ENCODE measurements at regions of chr3 and their contacts with region 1.

Region 1: DNA sequence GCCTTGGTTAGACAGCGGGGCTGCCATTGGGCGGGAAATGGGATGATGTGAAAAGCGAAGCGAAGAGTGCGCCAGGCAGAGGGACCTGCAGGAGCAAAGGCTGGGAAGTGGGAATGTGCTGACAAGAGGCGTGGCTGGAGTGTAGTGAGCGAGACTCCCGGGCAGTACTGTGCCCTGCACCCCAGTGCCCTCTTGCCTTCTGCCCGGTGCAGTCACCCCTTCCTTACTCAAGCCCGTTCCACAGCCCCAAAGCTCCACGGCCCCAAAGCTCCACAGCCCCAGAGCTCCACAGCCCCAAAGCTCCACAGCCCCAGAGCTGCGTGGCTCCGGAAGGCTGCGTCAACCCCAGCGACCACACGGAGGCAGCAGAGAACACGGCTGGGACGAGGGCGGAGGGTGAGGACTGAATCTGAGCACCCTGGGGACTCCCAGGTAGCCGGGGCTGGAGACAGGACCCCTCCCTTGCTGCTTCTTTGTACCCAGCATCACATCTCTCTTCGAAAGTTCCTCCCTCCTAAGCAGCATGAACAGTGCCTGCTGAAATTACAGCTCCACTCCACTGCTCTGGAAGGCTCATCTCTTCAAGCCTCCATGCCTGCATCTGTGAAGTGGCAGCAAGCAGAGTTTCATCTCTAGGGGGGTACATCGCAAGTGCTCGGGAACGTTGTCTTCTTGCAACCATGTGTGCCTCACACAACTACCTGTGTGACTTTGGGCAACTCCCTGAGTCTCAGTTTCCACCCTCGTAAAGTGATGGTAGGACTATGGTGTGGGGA is 108.9 kb downstream of the FBLN2 start:
- DNase-seq: peak; percentile 62 to 73 (median 69)
- H3K4me3 ChIP-seq: no peak overlapping the region
- H3K4me3 Mint-ChIP-seq: peak overlapping the region in 2 of 8 donors; percentile 55 to 57
- H3K27ac ChIP-seq: no peak overlapping the region
- H3K27ac Mint-ChIP-seq: peak overlapping the region in 2 of 7 donors; percentile 42 to 51
- H3K4me1 ChIP-seq: peaks cover 31% of the 10 kb centered on the region
- H3K4me1 Mint-ChIP-seq: peaks cover 15 to 46% (median 28%) of the 10 kb centered on the region in 4 donors
- H3K27me3 ChIP-seq: peaks cover 6% of the 10 kb centered on the region
- H3K27me3 Mint-ChIP-seq: peaks cover 3 to 5% of the 10 kb centered on the region in 2 donors

Region 2: DNA sequence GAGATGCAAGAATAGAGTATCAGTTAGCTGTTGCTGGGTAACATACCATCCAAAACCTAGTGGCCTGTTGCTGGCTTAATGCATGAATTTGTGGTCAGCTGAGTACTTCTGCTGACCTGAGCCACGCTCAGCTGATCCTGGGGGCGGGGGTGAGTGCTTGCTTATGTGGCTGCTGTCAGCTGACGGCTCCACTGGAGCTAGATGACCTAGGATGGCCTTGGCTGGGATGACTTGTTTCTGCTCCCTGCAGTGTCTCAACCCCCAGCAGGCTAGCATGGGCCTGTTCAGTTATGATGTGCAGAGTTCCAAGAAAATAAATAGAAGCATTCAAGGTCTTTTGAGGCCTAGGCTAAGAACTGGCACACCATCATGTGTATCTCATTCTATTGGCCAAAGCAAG is 45.0 kb before region 1 on chr3:
- CTCF ChIA-PET with region 1: no interaction called
- POLR2A ChIA-PET with region 1: no interaction called
- intact Hi-C with region 1: no loop called
- DNase-seq: no peak
- H3K4me3 ChIP-seq: no peak overlapping the region
- H3K4me3 Mint-ChIP-seq: no peak overlapping the region
- H3K27ac ChIP-seq: no peak overlapping the region
- H3K27ac Mint-ChIP-seq: no peak overlapping the region
- H3K4me1 ChIP-seq: no peaks in the 10 kb centered on the region
- H3K4me1 Mint-ChIP-seq: no peaks in the 10 kb centered on the region
- H3K27me3 ChIP-seq: no peaks in the 10 kb centered on the region
- H3K27me3 Mint-ChIP-seq: peaks cover 4 to 16% of the 10 kb centered on the region in 2 donors

Region 3: DNA sequence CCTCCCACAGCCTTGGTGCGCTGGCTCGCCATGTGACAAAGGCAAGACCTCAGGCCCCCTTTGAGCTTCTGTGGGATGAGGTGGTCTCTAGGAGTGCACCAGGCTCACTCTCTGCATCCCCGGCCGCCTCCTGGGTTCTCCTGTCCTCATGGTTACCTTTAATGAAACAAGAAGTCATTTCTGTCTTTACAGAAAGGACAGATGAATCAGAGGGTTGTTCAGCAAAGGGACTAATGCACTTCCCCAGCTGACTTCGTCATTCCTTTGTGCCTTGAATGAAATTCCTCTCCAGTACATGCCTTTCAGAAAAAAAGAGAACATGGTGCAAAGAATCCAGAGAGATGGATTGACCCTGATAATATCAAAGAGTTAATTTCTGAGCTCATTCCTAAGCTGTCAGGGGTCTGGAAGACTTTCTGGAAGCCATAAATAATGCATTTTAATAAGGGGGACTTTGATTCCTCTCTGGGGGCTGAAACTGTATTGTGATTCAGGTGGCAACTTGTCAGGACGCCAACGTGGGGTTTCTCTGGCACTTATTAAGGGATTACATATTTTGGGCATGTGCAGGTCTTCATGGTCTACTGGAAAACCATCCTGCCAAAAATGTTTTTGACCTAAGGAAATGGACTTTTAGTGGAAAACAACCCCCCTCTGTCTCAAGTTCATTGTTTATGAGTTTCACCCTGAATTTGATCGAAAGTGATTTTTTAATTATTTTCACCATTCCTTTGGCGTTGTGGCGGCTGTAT is 13.8 kb after region 1 on chr3:
- CTCF ChIA-PET with region 1: interaction called, 15 read pairs
- POLR2A ChIA-PET with region 1: no interaction called
- intact Hi-C with region 1: no loop called
- DNase-seq: no peak
- H3K4me3 ChIP-seq: no peak overlapping the region
- H3K4me3 Mint-ChIP-seq: no peak overlapping the region
- H3K27ac ChIP-seq: no peak overlapping the region
- H3K27ac Mint-ChIP-seq: no peak overlapping the region
- H3K4me1 ChIP-seq: no peaks in the 10 kb centered on the region
- H3K4me1 Mint-ChIP-seq: peaks cover 0 to 3% (median 0%) of the 10 kb centered on the region in 4 donors
- H3K27me3 ChIP-seq: no peaks in the 10 kb centered on the region
- H3K27me3 Mint-ChIP-seq: peaks cover 24 to 26% of the 10 kb centered on the region in 2 donors

Region 4: DNA sequence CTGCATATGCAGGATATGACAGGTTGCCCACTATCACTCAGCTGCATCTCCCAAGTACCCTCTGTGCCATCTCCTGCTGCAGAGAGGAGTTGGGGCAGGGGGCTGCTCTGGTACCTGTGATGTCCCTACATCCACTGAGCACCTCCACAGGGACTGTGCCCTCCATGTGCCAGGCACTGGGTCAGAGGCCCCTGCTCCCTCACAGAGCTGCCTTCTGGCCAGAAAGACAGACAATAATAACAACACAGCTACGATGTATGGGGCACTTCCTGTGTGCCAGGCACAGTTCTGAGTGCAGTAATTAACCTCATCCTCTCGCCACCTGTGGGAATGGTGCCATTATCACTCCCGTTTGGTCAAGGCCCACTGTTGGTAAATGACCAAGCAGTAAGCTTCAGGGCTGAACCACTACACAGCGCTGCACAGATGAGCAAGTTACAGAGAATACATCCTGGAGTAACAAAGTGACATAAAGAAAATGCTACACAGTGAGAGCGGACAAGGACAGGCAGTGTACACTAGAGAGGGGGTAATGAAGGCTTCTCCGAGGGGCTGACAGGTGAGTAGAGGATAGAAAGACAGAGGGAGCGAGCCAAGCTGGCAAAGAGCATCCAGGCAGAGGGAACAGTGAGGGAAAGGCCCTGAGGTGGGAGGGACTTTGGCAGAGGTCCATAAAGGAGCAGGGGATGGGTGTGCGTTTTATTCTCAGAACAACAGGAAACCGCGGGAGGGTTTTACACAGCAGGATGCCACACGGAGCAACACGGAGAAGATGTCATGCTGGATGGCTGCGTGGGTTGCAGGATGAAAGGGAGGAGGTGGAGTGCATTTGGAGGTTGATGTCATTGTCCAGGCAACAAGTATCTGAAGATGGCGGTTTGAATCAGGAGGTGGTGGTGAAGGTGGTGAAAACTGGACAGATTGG is 208.5 kb after region 1 on chr3:
- CTCF ChIA-PET with region 1: interaction called, 57 read pairs
- POLR2A ChIA-PET with region 1: interaction called, 9 read pairs
- intact Hi-C with region 1: no loop called
- DNase-seq: peak; percentile 80 to 87 (median 84)
- H3K4me3 ChIP-seq: peak overlapping the region in 1 of 2 donors; percentile 36
- H3K4me3 Mint-ChIP-seq: peak overlapping the region; percentile 72 to 84 (median 79)
- H3K27ac ChIP-seq: peak overlapping the region; percentile 64
- H3K27ac Mint-ChIP-seq: peak overlapping the region; percentile 83 to 100 (median 98)
- H3K4me1 ChIP-seq: peaks cover 72% of the 10 kb centered on the region
- H3K4me1 Mint-ChIP-seq: peaks cover 48 to 75% (median 63%) of the 10 kb centered on the region in 4 donors
- H3K27me3 ChIP-seq: no peaks in the 10 kb centered on the region
- H3K27me3 Mint-ChIP-seq: no peaks in the 10 kb centered on the region

Region 5: GRCh38 chr3:13879655-13880204 is 221.9 kb after region 1 on chr3 and contains the start of gene WNT7A:
- CTCF ChIA-PET with region 1: interaction called, 996 read pairs
- POLR2A ChIA-PET with region 1: interaction called, 142 read pairs
- intact Hi-C with region 1: loop called (anchors 1 kb)
- DNase-seq: peak in 3 of 5 donors; percentile 60 to 70 (median 61)
- H3K4me3 ChIP-seq: peak within 1 kb of the TSS; percentile 61 to 64
- H3K4me3 Mint-ChIP-seq: peak within 1 kb of the TSS; percentile 92 to 99 (median 94)
- H3K27ac ChIP-seq: peak within 1 kb of the TSS; percentile 58
- H3K27ac Mint-ChIP-seq: peak within 1 kb of the TSS; percentile 69 to 95 (median 85)
- H3K4me1 ChIP-seq: peaks cover 20% of the 10 kb centered on the region
- H3K4me1 Mint-ChIP-seq: peaks cover 10 to 37% (median 24%) of the 10 kb centered on the region in 4 donors
- H3K27me3 ChIP-seq: no peaks in the 10 kb centered on the region
- H3K27me3 Mint-ChIP-seq: peaks cover 12 to 13% of the 10 kb centered on the region in 2 donors
- total RNA-seq, gene WNT7A: 18.0 to 19.3 TPM

Measured in CD4-positive, alpha-beta memory T cell (primary cell).